Posterior cingulate gyrus (tissue), 11 donors: ENCODE measurements at regions of chr4 and their contacts with region 1.

Region 1: GRCh38 chr4:83261307-83261706 is 23.3 kb downstream of the COQ2 start:
- DNase-seq: no peak

Region 2: GRCh38 chr4:83074086-83074704 is 187.1 kb before region 1 on chr4:
- intact Hi-C with region 1: loop called (anchors 5 kb)
- DNase-seq: peak in 2 of 10 donors; percentile 12 to 21